ENCODE measurements at regions of chr5 and their contacts with region 1.

Region 1: GRCh38 chr5:121805911-121806310 is 45.8 kb upstream of the FTMT start:
- DNase-seq: no peak
- H3K4me3 ChIP-seq: no peak overlapping the region
- CTCF ChIP-seq: no peak
- POLR2A ChIP-seq: no peak

Region 2: DNA sequence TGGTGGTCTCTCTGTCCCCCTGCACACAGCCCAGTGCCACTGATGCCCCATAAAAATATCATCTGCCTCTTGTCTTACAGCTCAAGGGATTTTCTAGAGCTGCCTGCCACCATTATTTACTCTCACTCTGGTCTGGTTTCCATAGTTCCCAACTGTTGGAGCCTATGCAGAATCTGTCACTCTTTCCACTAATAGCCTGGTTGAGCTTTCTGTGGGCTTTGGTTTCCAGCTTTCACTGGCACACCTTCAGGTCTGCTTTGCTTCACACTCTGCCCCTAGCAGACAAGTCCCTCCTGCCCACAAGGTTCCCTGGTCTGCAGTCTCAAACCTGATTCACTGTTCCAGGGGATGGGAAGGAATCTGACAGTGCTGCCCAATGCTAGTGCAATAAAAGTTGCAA is 57.2 kb before region 1 on chr5:
- intact Hi-C with region 1: no loop called
- DNase-seq: no peak
- H3K4me3 ChIP-seq: no peak overlapping the region
- CTCF ChIP-seq: no peak
- POLR2A ChIP-seq: no peak

Region 3: GRCh38 chr5:122111460-122111859 is 305.5 kb after region 1 on chr5:
- intact Hi-C with region 1: no loop called
- DNase-seq: no peak
- H3K4me3 ChIP-seq: no peak overlapping the region
- CTCF ChIP-seq: no peak
- POLR2A ChIP-seq: no peak

Region 4: GRCh38 chr5:122463221-122463620 is 657.3 kb after region 1 on chr5:
- intact Hi-C with region 1: loop called (anchors 5 kb)
- DNase-seq: no peak
- H3K4me3 ChIP-seq: no peak overlapping the region
- CTCF ChIP-seq: no peak
- POLR2A ChIP-seq: no peak

Measured in lower leg skin (tissue), 4 donors.